ENCODE measurements at regions of chr7 and their contacts with region 1.

Region 1: GRCh38 chr7:41491883-41492471 is 210.9 kb downstream of the INHBA start:
- DNase-seq: no peak
- ATAC-seq: no peak
- H3K4me3 ChIP-seq: no peak overlapping the region
- H3K4me3 Mint-ChIP-seq: no peak overlapping the region
- H3K27ac ChIP-seq: no peak overlapping the region
- H3K27ac Mint-ChIP-seq: no peak overlapping the region
- H3K4me1 ChIP-seq: no peaks in the 10 kb centered on the region
- H3K4me1 Mint-ChIP-seq: no peaks in the 10 kb centered on the region
- H3K27me3 ChIP-seq: no peaks in the 10 kb centered on the region
- H3K27me3 Mint-ChIP-seq: no peaks in the 10 kb centered on the region
- CTCF ChIP-seq: no peak

Region 2: GRCh38 chr7:39952374-39952773 is 1539.6 kb before region 1 on chr7:
- CTCF ChIA-PET with region 1: no interaction called
- POLR2A ChIA-PET with region 1: no interaction called
- intact Hi-C with region 1: no loop called
- DNase-seq: peak in 2 of 9 experiments; percentile 39 to 62
- ATAC-seq: no peak
- H3K4me3 ChIP-seq: peak overlapping the region; percentile 83 to 93
- H3K4me3 Mint-ChIP-seq: peak overlapping the region; percentile 99
- H3K27ac ChIP-seq: peak overlapping the region; percentile 81 to 88
- H3K27ac Mint-ChIP-seq: peak overlapping the region; percentile 98
- H3K4me1 ChIP-seq: peaks cover 54% of the 10 kb centered on the region
- H3K4me1 Mint-ChIP-seq: peaks cover 68% of the 10 kb centered on the region
- H3K27me3 ChIP-seq: no peaks in the 10 kb centered on the region
- H3K27me3 Mint-ChIP-seq: no peaks in the 10 kb centered on the region
- CTCF ChIP-seq: no peak

Region 3: GRCh38 chr7:42338231-42338915 is 846.4 kb after region 1 on chr7:
- CTCF ChIA-PET with region 1: no interaction called
- POLR2A ChIA-PET with region 1: no interaction called
- intact Hi-C with region 1: loop called in 1 of 2 experiments (anchors 10 kb)
- DNase-seq: no peak
- ATAC-seq: no peak
- H3K4me3 ChIP-seq: no peak overlapping the region
- H3K4me3 Mint-ChIP-seq: no peak overlapping the region
- H3K27ac ChIP-seq: no peak overlapping the region
- H3K27ac Mint-ChIP-seq: no peak overlapping the region
- H3K4me1 ChIP-seq: no peaks in the 10 kb centered on the region
- H3K4me1 Mint-ChIP-seq: no peaks in the 10 kb centered on the region
- H3K27me3 ChIP-seq: no peaks in the 10 kb centered on the region
- H3K27me3 Mint-ChIP-seq: no peaks in the 10 kb centered on the region
- CTCF ChIP-seq: no peak